ENCODE measurements at regions of chr9 and their contacts with region 1.

Region 1: DNA sequence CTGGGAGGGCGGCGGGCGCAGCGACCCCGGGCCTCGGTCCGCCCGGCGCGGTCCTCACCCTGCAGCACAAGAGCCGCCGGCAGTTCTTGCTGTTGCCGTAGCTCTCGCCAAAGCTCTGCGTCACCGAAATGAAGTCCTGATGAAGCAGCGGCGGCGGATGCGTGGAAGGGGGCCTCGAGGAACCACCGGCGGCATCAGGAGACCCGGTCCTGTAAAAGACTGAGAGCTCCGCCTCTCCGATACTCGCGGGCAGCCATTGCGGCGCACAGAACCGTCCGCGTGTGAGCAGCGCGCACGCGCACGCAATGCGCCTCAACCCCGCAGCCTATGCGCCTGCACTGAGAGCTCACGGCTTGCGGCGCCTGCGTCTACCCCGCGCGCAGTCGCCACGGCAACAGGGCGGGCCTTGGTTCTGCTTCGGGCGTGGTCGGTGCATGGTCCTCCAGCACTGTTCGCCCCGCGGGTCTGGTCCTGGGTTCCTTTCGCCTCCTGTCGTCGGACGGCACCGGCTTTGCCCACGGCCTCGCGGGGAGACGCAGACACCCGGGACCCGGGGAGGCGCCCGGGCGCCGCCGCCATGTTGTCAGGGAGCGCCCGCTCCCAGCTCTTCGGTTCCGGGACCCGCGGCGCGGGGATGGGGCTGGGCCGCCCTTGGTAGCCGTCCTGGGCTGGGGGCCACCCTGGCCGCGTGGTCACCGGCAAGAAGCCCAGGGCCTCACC is 9.3 kb upstream of the GRIN1 start:
- DNase-seq: peak; percentile 92
- H3K4me3 Mint-ChIP-seq: peak overlapping the region; percentile 91
- H3K27ac Mint-ChIP-seq: peak overlapping the region; percentile 74
- H3K4me1 Mint-ChIP-seq: peaks cover 17% of the 10 kb centered on the region
- H3K27me3 Mint-ChIP-seq: peaks cover 5% of the 10 kb centered on the region

Region 2: DNA sequence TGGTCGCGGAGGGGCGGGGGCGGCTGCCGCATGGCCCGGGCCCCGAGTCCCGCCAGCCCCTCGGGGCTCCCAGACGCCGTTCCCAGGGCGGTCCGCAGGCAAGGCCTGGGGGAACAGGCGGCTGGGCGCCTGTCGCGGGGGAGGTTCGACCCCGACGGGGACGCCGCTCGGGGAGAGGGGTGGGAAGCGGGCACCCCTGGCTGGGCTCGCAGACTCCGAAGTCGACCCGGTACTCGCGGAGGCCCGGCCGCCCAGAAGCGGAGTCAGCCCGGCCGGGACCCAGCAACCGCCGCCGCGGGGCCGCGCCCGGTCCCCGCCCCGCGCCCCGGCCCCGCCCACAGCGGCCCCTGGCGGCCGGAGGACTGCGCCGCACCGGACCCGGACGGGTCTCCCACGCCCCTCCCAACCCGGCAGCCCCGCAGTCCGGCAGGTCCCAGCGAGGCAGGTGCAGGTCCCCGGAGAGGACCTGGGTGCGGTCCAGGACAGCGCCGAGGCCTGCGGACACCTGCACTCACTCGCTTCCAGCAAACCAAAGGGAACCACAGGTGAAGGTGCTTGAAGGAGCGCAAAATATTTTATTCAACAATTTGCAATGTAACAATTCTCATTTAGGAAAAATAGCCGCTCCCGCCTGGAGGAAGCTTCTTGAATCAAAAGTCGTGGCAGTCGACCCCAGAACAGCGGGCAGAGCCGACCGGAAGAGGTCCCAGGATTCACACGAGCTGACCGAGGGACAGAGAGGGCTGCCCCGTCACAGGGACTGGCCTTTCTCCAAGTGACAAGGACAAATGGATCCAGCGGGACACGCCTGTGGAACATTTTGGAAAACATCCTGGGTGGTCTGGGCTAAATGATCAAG is 689.8 kb before region 1 on chr9 and contains the start of gene INPP5E:
- CTCF ChIA-PET with region 1: no interaction called
- intact Hi-C with region 1: no loop called
- DNase-seq: peak; percentile 76
- H3K4me3 Mint-ChIP-seq: peak within 1 kb of the TSS; percentile 79
- H3K27ac Mint-ChIP-seq: peak within 1 kb of the TSS; percentile 56
- H3K4me1 Mint-ChIP-seq: peaks cover 23% of the 10 kb centered on the region
- H3K27me3 Mint-ChIP-seq: no peaks in the 10 kb centered on the region
- total RNA-seq, gene INPP5E: 13.9 to 14.8 TPM

Region 3: DNA sequence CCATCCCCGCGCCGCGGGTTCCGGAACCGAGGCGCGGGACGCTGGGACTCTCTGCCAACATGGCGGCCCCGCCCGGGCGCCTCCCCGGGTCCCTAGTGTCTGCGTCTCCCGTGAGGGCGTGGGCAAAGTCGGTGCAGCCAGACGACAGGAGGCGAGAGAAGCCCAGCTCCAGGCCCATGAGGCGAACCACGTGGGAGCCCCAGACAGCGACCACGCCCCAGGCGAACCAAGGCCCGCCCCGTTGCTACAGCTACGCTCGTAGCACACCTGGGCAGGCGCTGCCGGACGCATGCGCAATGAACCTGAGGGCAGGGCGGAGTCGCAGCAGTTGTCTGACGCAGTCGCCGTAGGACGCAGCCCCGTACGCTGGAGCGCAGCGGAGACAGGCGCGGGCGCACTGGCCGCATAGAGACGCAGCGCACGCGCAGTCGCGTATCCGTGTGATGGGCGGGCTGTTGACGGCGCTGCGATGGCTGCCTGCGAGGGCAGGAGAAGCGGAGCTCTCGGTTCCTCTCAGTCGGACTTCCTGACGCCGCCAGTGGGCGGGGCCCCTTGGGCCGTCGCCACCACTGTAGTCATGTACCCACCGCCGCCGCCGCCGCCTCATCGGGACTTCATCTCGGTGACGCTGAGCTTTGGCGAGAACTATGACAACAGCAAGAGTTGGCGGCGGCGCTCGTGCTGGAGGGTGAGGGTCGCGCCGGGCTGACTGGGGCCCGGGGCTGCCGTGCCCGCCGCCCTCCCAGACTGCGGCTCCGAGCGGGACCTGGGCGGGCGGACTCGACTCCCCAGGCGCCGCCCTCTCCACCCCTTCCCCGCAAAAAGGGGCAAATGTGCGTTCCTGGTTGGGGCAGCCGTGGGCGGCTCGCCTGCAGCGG is 42.8 kb before region 1 on chr9 and contains the start of gene MAN1B1:
- CTCF ChIA-PET with region 1: no interaction called
- intact Hi-C with region 1: loop called (anchors 5 kb)
- DNase-seq: peak; percentile 100
- H3K4me3 Mint-ChIP-seq: peak within 1 kb of the TSS; percentile 89
- H3K27ac Mint-ChIP-seq: peak within 1 kb of the TSS; percentile 89
- H3K4me1 Mint-ChIP-seq: peaks cover 36% of the 10 kb centered on the region
- H3K27me3 Mint-ChIP-seq: no peaks in the 10 kb centered on the region
- total RNA-seq, gene MAN1B1: 18.7 to 18.9 TPM

Region 4: DNA sequence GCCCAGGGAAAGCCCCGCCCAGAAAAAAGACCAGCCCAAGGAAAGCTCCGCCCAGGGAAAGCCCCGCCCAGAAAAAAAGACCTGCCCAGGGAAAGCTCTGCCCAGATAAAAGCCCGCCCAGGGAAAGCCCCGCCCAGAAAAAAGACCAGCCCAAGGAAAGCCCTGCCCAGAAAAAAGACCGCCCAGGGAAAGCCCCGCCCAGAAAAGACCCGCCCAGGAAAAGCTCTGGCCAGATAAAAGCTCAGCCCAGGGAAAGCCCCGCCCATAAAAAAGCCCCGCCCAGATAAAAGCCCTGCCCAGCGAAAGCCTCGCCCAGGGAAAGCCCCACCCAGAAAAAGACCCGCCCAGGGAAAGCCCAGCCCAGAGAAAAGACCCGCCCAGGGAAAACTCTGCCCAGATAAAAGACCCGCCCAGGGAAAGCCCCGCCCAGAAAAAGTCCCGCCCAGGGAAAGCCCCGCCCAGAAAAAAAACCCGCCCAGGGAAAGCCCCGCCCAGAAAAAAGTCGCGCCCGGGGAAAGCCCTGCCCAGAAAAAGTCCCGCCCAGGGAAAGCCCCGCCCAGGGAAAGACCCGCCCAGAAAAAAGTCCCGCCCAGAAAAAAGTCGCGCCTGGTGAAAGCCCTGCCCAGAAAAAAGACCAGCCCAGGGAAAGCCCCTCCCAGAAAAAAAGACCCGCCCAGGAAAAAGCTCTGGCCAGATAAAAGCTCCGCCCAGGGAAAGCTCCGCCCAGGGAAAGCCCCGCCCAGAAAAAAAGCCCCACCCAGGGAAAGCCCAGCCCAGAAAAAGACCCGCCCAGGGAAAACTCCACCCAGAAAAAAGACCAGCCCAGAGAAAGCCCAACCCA is 21.2 kb after region 1 on chr9:
- CTCF ChIA-PET with region 1: no interaction called
- intact Hi-C with region 1: loop called (anchors 2 kb)
- DNase-seq: peak; percentile 89
- H3K4me3 Mint-ChIP-seq: no peak overlapping the region
- H3K27ac Mint-ChIP-seq: peak overlapping the region; percentile 61
- H3K4me1 Mint-ChIP-seq: peaks cover 7% of the 10 kb centered on the region
- H3K27me3 Mint-ChIP-seq: peaks cover 16% of the 10 kb centered on the region

Region 5: GRCh38 chr9:137176302-137177182 is 46.9 kb after region 1 on chr9:
- CTCF ChIA-PET with region 1: interaction called, 3 read pairs
- intact Hi-C with region 1: loop called (anchors 5 kb)
- DNase-seq: no peak
- H3K4me3 Mint-ChIP-seq: no peak overlapping the region
- H3K27ac Mint-ChIP-seq: no peak overlapping the region
- H3K4me1 Mint-ChIP-seq: peaks cover 8% of the 10 kb centered on the region
- H3K27me3 Mint-ChIP-seq: peaks cover 4% of the 10 kb centered on the region

Region 6: DNA sequence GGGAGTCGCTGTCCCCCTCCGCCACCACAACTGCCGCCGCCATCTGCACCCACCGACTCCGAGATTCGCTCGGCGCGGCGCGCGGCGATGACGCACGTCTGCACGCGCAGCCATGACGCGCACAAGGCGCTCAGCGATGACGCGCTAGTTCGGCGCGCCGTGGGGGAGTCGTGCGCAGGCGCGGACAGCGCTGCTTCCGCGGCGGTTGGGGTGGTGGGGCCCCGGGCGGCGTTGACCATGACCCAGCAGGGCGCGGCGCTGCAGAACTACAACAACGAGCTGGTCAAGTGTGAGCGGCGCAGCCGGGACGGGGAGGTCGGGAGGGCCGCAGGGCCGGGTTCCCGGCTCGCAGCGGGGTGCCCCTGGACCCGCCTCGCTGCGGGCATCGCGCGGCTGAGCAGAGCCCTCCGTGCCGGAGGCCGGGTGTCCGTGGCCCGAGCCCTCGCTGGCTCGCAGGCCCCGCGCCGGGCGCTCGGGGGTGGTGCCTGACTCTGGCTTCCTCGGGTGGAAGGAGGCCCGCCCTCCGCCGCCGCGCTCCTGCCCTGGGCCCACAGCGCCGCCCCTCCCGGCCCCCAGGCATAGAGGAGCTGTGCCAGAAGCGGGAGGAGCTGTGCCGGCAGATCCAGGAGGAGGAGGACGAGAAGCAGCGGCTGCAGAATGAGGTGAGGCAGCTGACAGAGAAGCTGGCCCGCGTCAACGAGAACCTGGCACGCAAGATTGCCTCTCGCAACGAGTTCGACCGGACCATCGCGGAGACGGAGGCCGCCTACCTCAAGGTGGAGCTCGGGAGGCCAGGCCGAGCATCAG is 59.1 kb after region 1 on chr9 and contains the starts of genes ANAPC2 and SSNA1:
- CTCF ChIA-PET with region 1: interaction called, 4 read pairs
- intact Hi-C with region 1: loop called (anchors 5 kb)
- DNase-seq: peak; percentile 92
- H3K4me3 Mint-ChIP-seq: peak within 1 kb of the TSS; percentile 92
- H3K27ac Mint-ChIP-seq: peak within 1 kb of the TSS; percentile 88
- H3K4me1 Mint-ChIP-seq: peaks cover 39% of the 10 kb centered on the region
- H3K27me3 Mint-ChIP-seq: no peaks in the 10 kb centered on the region
- total RNA-seq, gene ANAPC2: 34.8 to 36.6 TPM
- total RNA-seq, gene SSNA1: 48.2 to 49.9 TPM

Region 7: DNA sequence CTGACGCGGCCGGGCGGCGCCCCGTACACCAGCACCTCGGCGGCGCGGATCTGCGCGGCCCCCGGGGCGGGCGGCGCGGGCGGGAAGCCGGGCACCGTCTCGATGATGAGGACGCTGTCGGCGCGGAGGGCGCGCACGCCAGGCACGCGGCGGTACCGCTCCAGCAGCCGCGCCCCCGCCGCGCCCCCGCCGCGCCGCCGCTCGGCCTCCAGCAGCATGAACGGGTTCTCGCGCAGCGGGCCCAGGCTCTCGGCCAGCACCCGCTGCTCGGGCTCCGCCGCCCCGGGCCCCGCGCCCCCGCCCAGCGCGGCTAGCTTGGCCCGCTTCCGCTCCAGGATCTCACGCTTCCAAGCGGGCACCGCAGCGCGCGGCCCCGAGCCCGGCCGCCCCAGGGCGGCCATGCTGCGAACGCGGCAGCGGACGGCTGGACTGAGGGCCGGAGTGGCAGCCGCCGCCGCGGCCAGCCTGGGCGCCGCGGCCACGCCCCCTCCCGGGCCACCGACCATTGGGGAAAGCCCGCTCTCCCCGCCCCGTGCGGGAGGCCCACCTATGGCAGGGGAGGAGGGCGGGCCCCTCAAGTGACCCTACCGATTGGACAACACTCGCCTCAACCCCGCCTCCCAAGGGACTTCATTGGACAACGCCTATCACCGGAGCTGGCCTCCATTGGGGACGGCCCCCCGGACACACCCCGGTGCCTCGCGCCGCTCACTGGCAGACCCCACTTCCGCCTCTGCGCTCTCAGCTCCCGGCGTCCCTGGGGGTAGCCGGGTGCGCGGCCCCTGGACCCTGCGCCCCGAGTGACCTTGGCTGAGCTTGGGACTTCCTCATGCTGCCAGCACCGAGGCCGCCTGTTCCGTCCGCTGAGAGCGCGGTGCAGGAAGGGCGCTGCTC is 70.9 kb after region 1 on chr9 and contains the start of gene TPRN:
- CTCF ChIA-PET with region 1: no interaction called
- intact Hi-C with region 1: loop called (anchors 1 kb)
- DNase-seq: peak; percentile 99
- H3K4me3 Mint-ChIP-seq: peak within 1 kb of the TSS; percentile 80
- H3K27ac Mint-ChIP-seq: peak within 1 kb of the TSS; percentile 56
- H3K4me1 Mint-ChIP-seq: peaks cover 33% of the 10 kb centered on the region
- H3K27me3 Mint-ChIP-seq: no peaks in the 10 kb centered on the region
- total RNA-seq, gene TPRN: 2.1 to 2.6 TPM

Region 8: GRCh38 chr9:137423004-137423874 is 293.6 kb after region 1 on chr9 and contains the starts of genes EXD3 and NOXA1:
- CTCF ChIA-PET with region 1: no interaction called
- intact Hi-C with region 1: loop called (anchors 1 kb)
- DNase-seq: peak; percentile 96
- H3K4me3 Mint-ChIP-seq: peak within 1 kb of the TSS; percentile 77
- H3K27ac Mint-ChIP-seq: peak within 1 kb of the TSS; percentile 13
- H3K4me1 Mint-ChIP-seq: peaks cover 16% of the 10 kb centered on the region
- H3K27me3 Mint-ChIP-seq: no peaks in the 10 kb centered on the region
- total RNA-seq, gene EXD3: 11.2 to 12.7 TPM
- total RNA-seq, gene NOXA1: 1.0 to 1.2 TPM